ENCODE measurements at regions of chr1 and their contacts with region 1.

Region 1: DNA sequence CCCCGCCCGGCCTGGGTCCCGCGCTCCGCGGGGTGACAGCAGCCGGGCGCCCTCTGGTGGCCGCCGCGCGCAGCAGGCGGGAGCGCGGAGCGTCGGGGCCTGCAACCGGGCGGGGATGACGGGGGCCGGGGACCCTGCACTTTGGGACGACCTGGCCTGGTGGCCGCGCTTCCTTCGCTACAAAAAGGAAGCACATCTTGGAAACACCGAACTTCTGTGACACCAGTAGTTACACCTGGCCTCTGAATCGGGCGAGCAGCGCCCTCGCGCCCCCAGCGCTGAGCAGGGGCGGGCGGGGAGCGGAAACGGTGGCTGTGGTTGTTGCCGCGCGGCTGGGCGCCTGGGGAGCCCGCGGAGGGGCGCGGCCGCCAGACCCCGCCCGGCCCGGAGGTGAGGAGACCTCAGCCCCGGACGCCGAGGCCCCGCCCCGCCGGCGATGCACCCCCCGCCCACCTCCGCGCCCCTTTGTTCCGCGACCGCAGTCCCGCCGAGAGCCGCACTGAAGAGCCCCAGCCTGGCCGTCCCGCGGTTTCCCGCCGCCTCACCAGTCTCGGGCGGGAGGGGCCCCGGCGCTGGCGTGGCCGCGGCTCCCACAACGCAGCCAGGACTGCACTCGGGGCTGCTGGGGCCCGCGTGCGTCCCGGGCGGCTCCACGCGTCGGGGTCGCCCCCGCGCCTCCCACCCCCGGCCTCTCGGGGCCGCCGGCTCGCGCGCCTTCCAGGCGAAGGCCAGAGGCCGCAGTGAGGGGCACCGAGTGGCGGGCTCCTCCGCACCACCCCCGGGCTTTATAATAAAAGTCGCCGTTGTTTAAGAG is 59.3 kb downstream of the H3-3A start:
- H3K4me3 ChIP-seq: peak overlapping the region; percentile 48
- H3K27ac ChIP-seq: peak overlapping the region; percentile 97
- H3K4me1 ChIP-seq: peaks cover 5% of the 10 kb centered on the region
- CTCF ChIP-seq: peak; percentile 98

Region 2: GRCh38 chr1:226062558-226063223 is 59.1 kb before region 1 on chr1 and contains the start of gene H3-3A:
- CTCF ChIA-PET with region 1: interaction called, 86 read pairs
- POLR2A ChIA-PET with region 1: interaction called, 27 read pairs
- H3K4me3 ChIP-seq: peak within 1 kb of the TSS; percentile 95
- H3K27ac ChIP-seq: peak within 1 kb of the TSS; percentile 98
- H3K4me1 ChIP-seq: peaks cover 14% of the 10 kb centered on the region; the same call in 1 of the 2 replicates
- CTCF ChIP-seq: peak; percentile 92

Region 3: DNA sequence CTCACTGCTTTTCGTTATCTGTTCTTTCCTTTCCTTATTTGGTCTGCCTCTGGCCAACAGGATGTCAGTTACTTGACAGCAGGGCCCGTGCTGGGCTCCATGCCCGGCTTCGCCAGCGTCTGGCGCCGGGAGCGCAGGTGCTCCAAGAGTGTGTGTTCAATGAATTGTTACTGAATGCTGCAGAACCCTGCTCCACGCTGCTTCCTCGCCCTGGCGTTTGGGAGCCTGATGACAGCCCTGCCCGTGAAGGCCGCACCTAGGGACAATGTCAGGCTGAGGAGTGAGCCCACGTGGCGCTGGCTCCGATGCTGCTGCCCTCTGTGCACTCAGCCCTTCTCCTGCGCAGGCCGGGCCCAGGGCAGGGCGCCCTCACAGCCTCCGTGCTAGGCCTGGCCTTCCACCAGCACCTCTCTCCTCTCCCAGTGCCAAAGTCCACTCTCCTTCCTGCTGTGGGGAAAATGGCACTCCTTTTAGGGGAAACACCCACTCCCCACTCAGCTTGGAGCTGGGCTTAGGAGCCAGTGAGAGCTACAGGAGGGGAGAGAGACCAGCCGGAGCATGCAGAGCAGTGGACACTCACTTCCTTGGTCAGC is 13.4 kb after region 1 on chr1:
- CTCF ChIA-PET with region 1: interaction called, 67 read pairs
- POLR2A ChIA-PET with region 1: no interaction called
- H3K4me3 ChIP-seq: no peak overlapping the region
- H3K27ac ChIP-seq: no peak overlapping the region
- H3K4me1 ChIP-seq: no peaks in the 10 kb centered on the region
- CTCF ChIP-seq: no peak

Region 4: DNA sequence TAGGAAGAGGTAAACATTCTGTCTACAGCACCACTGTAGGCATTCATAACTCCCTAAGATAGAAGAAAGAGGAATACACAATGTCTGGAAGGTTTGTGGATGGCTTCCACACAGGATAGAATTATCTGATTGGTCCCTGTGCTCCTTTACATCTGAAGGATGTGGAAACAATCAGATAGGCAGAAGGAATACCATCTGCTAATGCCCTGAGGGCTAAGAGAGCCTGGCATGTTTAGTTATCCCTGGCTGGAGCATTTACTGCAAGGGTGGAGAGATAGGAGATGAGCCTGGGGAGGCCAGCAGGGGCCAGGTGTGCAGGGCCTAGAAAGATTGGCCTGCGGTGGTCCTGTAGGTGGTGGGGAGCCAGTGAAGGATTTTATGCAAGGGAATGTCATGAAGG is 73.3 kb after region 1 on chr1:
- CTCF ChIA-PET with region 1: interaction called, 174 read pairs
- POLR2A ChIA-PET with region 1: interaction called, 6 read pairs
- H3K4me3 ChIP-seq: no peak overlapping the region
- H3K27ac ChIP-seq: no peak overlapping the region
- H3K4me1 ChIP-seq: peaks cover 5% of the 10 kb centered on the region; the same call in 1 of the 2 replicates
- CTCF ChIP-seq: no peak

Region 5: GRCh38 chr1:226308723-226309315 is 187.0 kb after region 1 on chr1 and contains the start of gene LIN9:
- CTCF ChIA-PET with region 1: interaction called, 16 read pairs
- POLR2A ChIA-PET with region 1: interaction called, 3 read pairs
- H3K4me3 ChIP-seq: peak within 1 kb of the TSS; percentile 81
- H3K27ac ChIP-seq: peak within 1 kb of the TSS; percentile 96
- H3K4me1 ChIP-seq: peaks cover 8% of the 10 kb centered on the region; the same call in 1 of the 2 replicates
- CTCF ChIP-seq: peak; percentile 93

Region 6: GRCh38 chr1:226390326-226391080 is 268.7 kb after region 1 on chr1:
- CTCF ChIA-PET with region 1: interaction called, 6 read pairs
- POLR2A ChIA-PET with region 1: interaction called, 10 read pairs
- H3K4me3 ChIP-seq: no peak overlapping the region
- H3K27ac ChIP-seq: no peak overlapping the region
- H3K4me1 ChIP-seq: no peaks in the 10 kb centered on the region
- CTCF ChIP-seq: no peak

Measured in HEK293 (cell line).